Sciatic nerve (tissue), 2 donors: ENCODE measurements at regions of chr2 and their contacts with region 1.

Region 1: DNA sequence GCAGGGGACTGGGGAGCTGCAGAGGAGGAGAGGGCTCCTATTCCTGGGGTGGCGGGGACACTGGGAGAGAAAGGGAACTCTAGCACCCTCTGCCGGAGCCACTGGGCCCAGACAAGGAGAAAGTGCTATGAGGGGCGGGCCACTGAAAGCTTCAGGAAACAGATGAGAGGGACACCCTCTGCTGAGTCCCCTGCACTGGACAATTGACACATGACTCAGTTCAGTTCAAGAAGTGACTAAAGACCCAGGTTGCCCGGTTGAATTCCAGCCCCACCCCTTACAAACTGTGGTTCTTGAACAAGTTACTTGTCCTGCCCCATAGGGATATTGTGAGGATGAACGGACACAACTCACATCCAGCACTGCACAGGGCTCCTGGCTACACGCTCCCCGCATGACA is 5.0 kb downstream of the RUFY4 start:
- DNase-seq: no peak
- ATAC-seq: peak; percentile 21

Region 2: DNA sequence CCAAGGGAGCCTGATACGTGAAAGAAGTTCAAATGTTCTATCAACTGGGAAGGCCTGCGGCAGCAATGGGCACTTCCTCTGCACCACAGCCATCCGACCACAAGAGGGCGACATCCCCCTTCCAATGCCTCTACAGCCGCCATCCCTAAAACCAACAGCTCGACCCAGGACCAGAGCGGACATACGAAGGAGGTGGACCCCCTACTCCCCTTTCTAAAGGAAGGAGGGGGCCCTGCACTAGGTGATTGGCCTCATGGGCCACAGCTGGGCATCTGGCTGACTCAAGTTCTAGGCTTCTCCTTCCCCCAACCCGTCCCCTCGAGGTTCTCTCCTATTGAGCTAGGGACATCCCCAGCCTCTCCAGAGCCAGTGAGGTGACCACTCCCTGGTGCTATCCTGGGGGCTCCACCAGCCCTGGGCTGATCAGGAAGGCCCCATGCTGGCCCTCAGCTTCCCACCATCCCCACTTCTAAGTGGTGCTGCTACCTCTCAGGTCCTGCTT is 288.4 kb before region 1 on chr2:
- intact Hi-C with region 1: loop called (anchors 2 kb)
- DNase-seq: peak; percentile 92
- ATAC-seq: peak; percentile 85